ENCODE measurements at regions of chr1 and their contacts with region 1.

Region 1: GRCh38 chr1:21344750-21345443 is 54.6 kb upstream of the ECE1 start:
- DNase-seq: no peak
- H3K4me3 Mint-ChIP-seq: peak overlapping the region; percentile 83
- H3K27ac Mint-ChIP-seq: peak overlapping the region; percentile 51
- H3K4me1 Mint-ChIP-seq: peaks cover 30% of the 10 kb centered on the region
- H3K27me3 Mint-ChIP-seq: peaks cover under 1% of the 10 kb centered on the region

Region 2: GRCh38 chr1:21324368-21325141 is 20.3 kb before region 1 on chr1:
- intact Hi-C with region 1: loop called (anchors 1 kb)
- DNase-seq: no peak
- H3K4me3 Mint-ChIP-seq: peak overlapping the region; percentile 60
- H3K27ac Mint-ChIP-seq: peak overlapping the region; percentile 93
- H3K4me1 Mint-ChIP-seq: peaks cover 63% of the 10 kb centered on the region
- H3K27me3 Mint-ChIP-seq: no peaks in the 10 kb centered on the region

Region 3: DNA sequence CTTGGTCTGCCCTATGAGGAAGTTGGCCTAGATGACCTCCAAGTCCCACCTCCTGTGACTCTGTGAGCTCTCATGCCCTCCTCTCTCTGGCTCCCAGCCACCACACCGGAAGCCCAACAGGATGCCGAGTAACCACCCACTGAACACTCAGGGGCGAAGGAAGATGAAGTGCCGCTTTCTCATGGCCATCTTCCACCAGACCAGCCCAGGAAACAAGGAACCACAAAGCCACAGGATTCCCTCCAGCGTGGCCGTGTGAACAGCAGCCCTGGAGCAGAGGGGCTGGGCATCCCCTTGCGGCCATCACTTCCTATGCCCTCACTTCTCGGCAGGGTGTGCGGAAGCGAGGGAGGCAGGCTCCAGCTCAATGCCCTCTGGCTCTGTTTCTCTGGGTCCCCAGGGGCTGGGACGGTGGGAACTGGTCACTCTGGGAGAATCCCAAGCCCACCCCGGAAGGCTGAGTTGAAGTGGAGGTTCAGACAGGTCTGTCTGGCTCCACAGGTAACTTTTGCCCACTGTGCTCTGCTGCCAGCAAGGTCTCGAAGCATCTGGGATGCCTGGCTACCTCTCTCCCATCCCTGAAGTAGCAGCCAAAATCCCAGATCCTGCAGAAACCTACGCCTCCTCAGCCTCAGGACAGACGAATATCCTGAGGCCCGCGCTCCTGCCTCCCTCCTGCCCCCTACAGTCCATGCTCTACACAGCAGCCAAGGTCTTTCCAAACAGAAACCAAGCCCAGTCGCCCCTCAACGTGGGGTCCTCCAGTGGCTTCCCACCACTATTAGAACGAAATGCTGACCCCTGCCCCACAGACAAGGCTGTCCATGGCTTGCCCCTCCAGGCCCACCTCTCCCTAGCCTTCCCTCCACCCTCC is 10.4 kb before region 1 on chr1:
- intact Hi-C with region 1: loop called (anchors 1 kb)
- DNase-seq: peak; percentile 79
- H3K4me3 Mint-ChIP-seq: peak overlapping the region; percentile 80
- H3K27ac Mint-ChIP-seq: peak overlapping the region; percentile 91
- H3K4me1 Mint-ChIP-seq: peaks cover 60% of the 10 kb centered on the region
- H3K27me3 Mint-ChIP-seq: no peaks in the 10 kb centered on the region

Measured in activated T-helper 2 cell treated with anti-CD3 and anti-CD28 coated beads, Interferon-gamma antibody, Interleukin-2, Interleukin-4, amounts not matched to agents 10 μg/mL and 5 μg/mL and 100 μg/mL, durations not matched to agents 14 hours and 24 hours and 36 hours (primary cell).